CD8-positive, alpha-beta T cell (primary cell): ENCODE measurements at regions of chr5 and their contacts with region 1.

Region 1: DNA sequence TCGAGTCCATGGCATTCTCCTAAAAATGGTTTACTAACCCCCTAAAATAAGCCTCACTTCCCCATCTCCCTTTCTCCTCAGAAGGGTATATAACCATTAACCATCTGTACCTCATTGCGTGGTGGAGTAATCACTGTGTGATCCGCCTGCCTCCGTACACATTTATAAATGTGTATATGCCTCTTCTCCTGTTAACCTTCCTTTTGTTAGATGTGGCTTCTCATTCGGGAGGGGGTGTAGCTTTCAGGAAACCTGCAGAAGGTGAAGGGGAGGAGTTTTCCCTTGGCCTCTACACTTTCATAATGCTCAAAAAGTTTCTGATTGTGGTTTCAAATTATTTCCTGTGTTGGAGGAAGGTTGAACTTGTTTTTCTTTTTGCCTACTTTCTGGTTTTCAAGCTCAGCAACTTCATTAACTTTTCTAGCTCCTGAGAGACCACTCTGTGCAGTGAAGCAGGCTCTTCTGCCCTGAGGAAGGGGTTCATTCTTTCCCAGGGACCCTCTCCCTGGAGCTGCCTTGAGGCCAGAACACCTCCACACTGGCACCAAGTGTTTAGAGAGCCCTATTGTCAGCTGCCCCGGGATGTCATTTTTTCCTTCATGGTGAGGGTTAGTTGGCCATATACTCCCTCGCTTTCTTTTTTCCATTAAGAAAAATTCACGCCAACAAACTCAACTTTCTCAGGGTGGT is 46.9 kb downstream of the RASGRF2 start:
- DNase-seq: peak in 7 of 9 experiments; percentile 39 to 89 (median 61)
- ATAC-seq: peak; percentile 87
- H3K4me3 ChIP-seq: peak overlapping the region; percentile 41 to 46
- H3K4me3 Mint-ChIP-seq: peak overlapping the region; percentile 83
- H3K27ac ChIP-seq: peak overlapping the region; percentile 46 to 75
- H3K27ac Mint-ChIP-seq: peak overlapping the region; percentile 94
- H3K4me1 ChIP-seq: peaks cover 74% of the 10 kb centered on the region
- H3K4me1 Mint-ChIP-seq: peaks cover 86% of the 10 kb centered on the region
- H3K27me3 ChIP-seq: no peaks in the 10 kb centered on the region
- H3K27me3 Mint-ChIP-seq: no peaks in the 10 kb centered on the region
- CTCF ChIP-seq: no peak

Region 2: GRCh38 chr5:80736730-80737129 is 270.4 kb before region 1 on chr5:
- CTCF ChIA-PET with region 1: no interaction called
- POLR2A ChIA-PET with region 1: no interaction called
- intact Hi-C with region 1: no loop called
- DNase-seq: no peak
- ATAC-seq: no peak
- H3K4me3 ChIP-seq: no peak overlapping the region
- H3K4me3 Mint-ChIP-seq: no peak overlapping the region
- H3K27ac ChIP-seq: no peak overlapping the region
- H3K27ac Mint-ChIP-seq: no peak overlapping the region
- H3K4me1 ChIP-seq: no peaks in the 10 kb centered on the region
- H3K4me1 Mint-ChIP-seq: peaks cover 22% of the 10 kb centered on the region
- H3K27me3 ChIP-seq: no peaks in the 10 kb centered on the region
- H3K27me3 Mint-ChIP-seq: no peaks in the 10 kb centered on the region
- CTCF ChIP-seq: no peak

Region 3: GRCh38 chr5:80967500-80968181 is 39.5 kb before region 1 on chr5:
- CTCF ChIA-PET with region 1: no interaction called
- POLR2A ChIA-PET with region 1: interaction called, 3 read pairs
- intact Hi-C with region 1: loop called (anchors 2 kb)
- DNase-seq: no peak
- ATAC-seq: no peak
- H3K4me3 ChIP-seq: no peak overlapping the region
- H3K4me3 Mint-ChIP-seq: no peak overlapping the region
- H3K27ac ChIP-seq: no peak overlapping the region
- H3K27ac Mint-ChIP-seq: peak overlapping the region; percentile 38
- H3K4me1 ChIP-seq: peaks cover 42% of the 10 kb centered on the region
- H3K4me1 Mint-ChIP-seq: peaks cover 66% of the 10 kb centered on the region
- H3K27me3 ChIP-seq: no peaks in the 10 kb centered on the region
- H3K27me3 Mint-ChIP-seq: no peaks in the 10 kb centered on the region
- CTCF ChIP-seq: no peak

Region 4: GRCh38 chr5:80985600-80986228 is 21.4 kb before region 1 on chr5:
- CTCF ChIA-PET with region 1: interaction called, 3 read pairs
- POLR2A ChIA-PET with region 1: interaction called, 4 read pairs
- intact Hi-C with region 1: loop called in 1 of 2 experiments (anchors 2 kb)
- DNase-seq: no peak
- ATAC-seq: no peak
- H3K4me3 ChIP-seq: no peak overlapping the region
- H3K4me3 Mint-ChIP-seq: no peak overlapping the region
- H3K27ac ChIP-seq: no peak overlapping the region
- H3K27ac Mint-ChIP-seq: peak overlapping the region; percentile 8
- H3K4me1 ChIP-seq: peaks cover 44% of the 10 kb centered on the region
- H3K4me1 Mint-ChIP-seq: peaks cover 74% of the 10 kb centered on the region
- H3K27me3 ChIP-seq: no peaks in the 10 kb centered on the region
- H3K27me3 Mint-ChIP-seq: no peaks in the 10 kb centered on the region
- CTCF ChIP-seq: no peak

Region 5: GRCh38 chr5:81044868-81045267 is 37.8 kb after region 1 on chr5:
- CTCF ChIA-PET with region 1: interaction called, 3 read pairs
- POLR2A ChIA-PET with region 1: no interaction called
- intact Hi-C with region 1: loop called in 1 of 2 experiments (anchors 5 kb)
- DNase-seq: no peak
- ATAC-seq: no peak
- H3K4me3 ChIP-seq: no peak overlapping the region
- H3K4me3 Mint-ChIP-seq: no peak overlapping the region
- H3K27ac ChIP-seq: no peak overlapping the region
- H3K27ac Mint-ChIP-seq: no peak overlapping the region
- H3K4me1 ChIP-seq: peaks cover 4% of the 10 kb centered on the region
- H3K4me1 Mint-ChIP-seq: peaks cover 73% of the 10 kb centered on the region
- H3K27me3 ChIP-seq: no peaks in the 10 kb centered on the region
- H3K27me3 Mint-ChIP-seq: no peaks in the 10 kb centered on the region
- CTCF ChIP-seq: no peak

Region 6: GRCh38 chr5:81326554-81326953 is 319.5 kb after region 1 on chr5:
- CTCF ChIA-PET with region 1: no interaction called
- POLR2A ChIA-PET with region 1: no interaction called
- intact Hi-C with region 1: no loop called
- DNase-seq: no peak
- ATAC-seq: no peak
- H3K4me3 ChIP-seq: no peak overlapping the region
- H3K4me3 Mint-ChIP-seq: no peak overlapping the region
- H3K27ac ChIP-seq: no peak overlapping the region
- H3K27ac Mint-ChIP-seq: no peak overlapping the region
- H3K4me1 ChIP-seq: no peaks in the 10 kb centered on the region
- H3K4me1 Mint-ChIP-seq: no peaks in the 10 kb centered on the region
- H3K27me3 ChIP-seq: no peaks in the 10 kb centered on the region
- H3K27me3 Mint-ChIP-seq: no peaks in the 10 kb centered on the region
- CTCF ChIP-seq: no peak

Region 7: DNA sequence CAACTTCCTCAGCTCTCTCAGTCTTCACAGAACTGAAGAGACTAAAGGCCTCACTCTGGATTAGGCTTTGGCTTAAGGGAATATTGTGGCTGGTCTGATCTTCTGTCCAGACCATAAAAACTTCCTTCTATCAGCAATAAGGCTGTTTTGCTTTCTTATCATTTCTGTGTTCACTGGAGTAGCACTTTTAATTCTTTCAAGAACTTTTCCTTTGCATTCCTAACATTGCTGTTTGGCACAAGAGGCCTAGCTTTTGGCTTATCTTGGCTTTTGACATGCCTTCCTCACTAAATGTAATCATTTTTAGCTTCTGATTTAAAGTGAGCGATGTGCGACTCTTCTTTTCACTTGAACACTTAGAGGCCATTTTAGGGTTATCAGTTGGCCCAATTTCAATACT is 475.5 kb after region 1 on chr5:
- CTCF ChIA-PET with region 1: no interaction called
- POLR2A ChIA-PET with region 1: no interaction called
- intact Hi-C with region 1: no loop called
- DNase-seq: no peak
- ATAC-seq: no peak
- H3K4me3 ChIP-seq: no peak overlapping the region
- H3K4me3 Mint-ChIP-seq: no peak overlapping the region
- H3K27ac ChIP-seq: no peak overlapping the region
- H3K27ac Mint-ChIP-seq: no peak overlapping the region
- H3K4me1 ChIP-seq: no peaks in the 10 kb centered on the region
- H3K4me1 Mint-ChIP-seq: no peaks in the 10 kb centered on the region
- H3K27me3 ChIP-seq: no peaks in the 10 kb centered on the region
- H3K27me3 Mint-ChIP-seq: no peaks in the 10 kb centered on the region
- CTCF ChIP-seq: no peak